Left cardiac atrium (tissue), 4 donors: ENCODE measurements at regions of chr10 and their contacts with region 1.

Region 1: DNA sequence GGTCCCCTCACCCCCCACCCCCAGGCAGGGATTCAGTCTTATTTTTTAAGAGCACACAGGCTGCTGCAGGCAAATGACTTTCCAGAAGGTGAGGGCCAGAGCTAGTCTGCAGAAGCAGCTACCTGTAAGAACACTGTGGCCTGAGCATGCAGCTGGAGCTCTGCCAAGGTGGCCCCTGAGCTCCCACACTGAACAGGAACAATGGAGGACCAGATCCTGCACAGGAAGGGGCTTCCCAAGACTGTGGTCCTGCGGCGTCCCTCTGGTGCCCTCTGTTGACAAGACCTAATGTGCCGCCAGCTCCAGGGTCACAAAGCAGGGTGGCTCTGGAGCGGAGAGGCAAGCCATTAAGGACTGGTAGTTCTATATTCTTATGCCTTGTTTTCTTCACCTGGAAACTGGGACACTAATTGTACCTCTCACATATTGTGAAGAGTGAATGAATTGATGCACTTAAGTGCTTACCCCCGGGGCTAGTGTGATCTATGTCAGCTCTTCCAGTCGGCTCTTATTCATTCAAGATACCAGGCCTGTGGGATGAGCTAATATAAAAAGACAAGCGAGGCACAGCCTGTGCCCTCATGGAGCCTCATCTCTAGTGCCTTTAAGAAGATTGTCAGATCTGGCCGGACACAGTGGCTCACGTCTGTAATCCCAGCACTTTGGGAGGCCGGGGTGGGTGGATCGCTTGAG is 8.0 kb upstream of the BEND7 start:
- DNase-seq: peak; percentile 47
- ATAC-seq: peak; percentile 80 to 81

Region 2: DNA sequence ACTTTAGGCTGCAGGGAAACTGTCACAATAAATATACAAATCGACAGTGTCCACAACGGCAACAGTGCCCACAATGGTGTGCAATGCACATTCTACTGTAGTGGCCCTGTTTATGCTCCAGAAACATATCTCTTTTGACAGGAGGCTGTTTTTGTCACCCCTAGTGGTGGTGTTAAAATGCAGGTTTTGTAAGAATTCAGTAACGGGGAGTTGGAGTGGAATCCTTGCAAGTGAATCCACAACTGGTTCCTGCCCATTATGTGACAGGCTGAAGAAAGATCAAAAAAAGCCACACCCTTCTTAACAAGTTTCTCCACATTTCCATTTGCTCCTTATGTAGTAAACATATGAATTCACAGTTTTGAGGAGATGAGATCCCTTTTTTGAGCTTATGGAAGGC is 66.5 kb before region 1 on chr10:
- intact Hi-C with region 1: no loop called
- DNase-seq: no peak
- ATAC-seq: no peak

Region 3: DNA sequence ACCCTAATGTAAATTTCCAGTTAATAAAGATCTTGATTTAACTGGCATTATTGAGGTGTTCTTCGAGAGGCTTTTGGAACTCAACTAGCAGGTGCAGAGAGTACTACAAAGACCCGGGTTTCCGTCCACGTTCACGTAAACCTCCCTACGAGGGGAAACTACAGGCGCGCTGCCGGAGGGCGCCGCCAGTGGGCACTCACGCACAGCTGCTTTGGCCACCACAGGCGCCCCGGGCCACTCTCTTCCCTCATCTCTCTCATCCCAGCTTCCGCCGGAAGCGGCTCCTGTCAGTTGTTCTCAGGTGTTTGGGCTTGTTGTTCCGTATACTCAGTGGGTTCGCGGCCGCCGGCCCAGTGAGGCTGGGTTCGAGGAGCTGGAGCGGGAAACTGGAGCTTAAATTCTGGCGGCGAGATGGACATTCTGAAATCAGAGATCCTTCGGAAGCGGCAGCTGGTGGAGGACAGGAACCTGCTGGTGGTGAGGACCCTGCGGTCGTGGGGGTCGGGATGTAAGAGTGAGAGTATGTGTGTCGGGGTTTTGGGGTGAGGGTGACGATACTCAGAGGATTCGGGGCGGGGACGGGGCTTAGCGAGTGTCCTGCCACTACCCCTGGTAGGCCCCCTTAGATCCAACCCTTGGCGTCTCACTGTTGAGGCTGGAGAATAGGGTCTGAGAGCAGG is 50.0 kb after region 1 on chr10 and contains the start of gene PRPF18:
- intact Hi-C with region 1: loop called in 1 of 2 experiments (anchors 5 kb)
- DNase-seq: peak; percentile 94
- ATAC-seq: peak; percentile 100
- total RNA-seq, gene PRPF18: 14.3 to 15.2 TPM